ENCODE measurements at regions of chr5 and their contacts with region 1.

Region 1: DNA sequence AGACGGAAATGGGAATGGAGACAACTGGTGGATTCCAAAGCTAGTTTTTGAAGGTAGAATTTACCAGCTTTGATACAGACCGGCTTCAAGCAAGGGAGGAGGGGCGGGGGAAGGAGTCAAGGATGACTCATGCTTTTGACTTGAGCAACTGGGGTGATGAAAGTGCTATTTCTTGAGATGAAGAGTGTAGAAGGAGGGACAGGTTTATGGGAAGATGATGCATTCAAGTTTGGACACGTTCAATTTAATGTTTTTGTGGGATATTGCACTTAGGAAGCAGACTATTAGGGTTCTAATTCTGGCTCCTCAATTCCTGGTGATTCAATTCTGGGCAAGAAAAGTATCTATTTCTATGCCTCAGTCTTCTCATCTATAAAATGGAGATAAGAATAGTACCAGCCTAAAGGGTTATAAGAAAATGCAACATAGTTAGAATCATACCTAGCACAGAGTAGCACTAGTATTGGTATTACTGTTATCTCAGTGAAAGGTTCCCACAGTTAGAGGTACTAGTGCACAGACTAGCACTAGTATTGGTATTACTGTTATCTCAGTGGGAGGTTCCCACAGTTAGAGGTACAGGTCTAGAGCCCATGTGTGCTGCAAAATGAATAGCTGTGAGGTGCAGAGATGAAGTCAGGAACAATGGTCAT is 4.6 kb downstream of the NIPAL4 start:
- DNase-seq: peak; percentile 92
- H3K4me3 Mint-ChIP-seq: peak overlapping the region; percentile 28
- H3K27ac Mint-ChIP-seq: peak overlapping the region; percentile 89
- H3K4me1 Mint-ChIP-seq: peaks cover 36% of the 10 kb centered on the region
- H3K27me3 Mint-ChIP-seq: peaks cover 16% of the 10 kb centered on the region

Region 2: DNA sequence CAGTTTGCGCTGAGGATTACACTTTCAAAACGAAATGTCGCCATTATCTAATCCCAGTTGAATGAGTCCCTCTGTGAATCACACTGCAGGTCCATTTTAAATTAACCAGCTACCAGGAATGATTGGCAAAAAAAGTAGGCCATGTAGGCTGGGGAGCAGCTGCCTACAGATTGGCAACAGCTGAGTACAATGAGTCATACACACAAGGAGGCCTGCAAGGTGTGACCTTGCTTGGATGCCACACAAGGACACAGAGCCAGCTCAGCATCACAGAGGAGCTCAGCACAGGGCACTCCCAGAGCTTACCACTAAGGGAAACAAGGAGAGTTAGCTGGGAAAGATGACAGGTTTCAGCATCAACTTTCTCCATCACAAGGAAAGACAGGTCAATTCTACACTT is 418.6 kb before region 1 on chr5:
- CTCF ChIA-PET with region 1: no interaction called
- intact Hi-C with region 1: loop called (anchors 10 kb)
- DNase-seq: peak; percentile 64
- H3K4me3 Mint-ChIP-seq: no peak overlapping the region
- H3K27ac Mint-ChIP-seq: peak overlapping the region; percentile 34
- H3K4me1 Mint-ChIP-seq: peaks cover 65% of the 10 kb centered on the region
- H3K27me3 Mint-ChIP-seq: no peaks in the 10 kb centered on the region

Region 3: DNA sequence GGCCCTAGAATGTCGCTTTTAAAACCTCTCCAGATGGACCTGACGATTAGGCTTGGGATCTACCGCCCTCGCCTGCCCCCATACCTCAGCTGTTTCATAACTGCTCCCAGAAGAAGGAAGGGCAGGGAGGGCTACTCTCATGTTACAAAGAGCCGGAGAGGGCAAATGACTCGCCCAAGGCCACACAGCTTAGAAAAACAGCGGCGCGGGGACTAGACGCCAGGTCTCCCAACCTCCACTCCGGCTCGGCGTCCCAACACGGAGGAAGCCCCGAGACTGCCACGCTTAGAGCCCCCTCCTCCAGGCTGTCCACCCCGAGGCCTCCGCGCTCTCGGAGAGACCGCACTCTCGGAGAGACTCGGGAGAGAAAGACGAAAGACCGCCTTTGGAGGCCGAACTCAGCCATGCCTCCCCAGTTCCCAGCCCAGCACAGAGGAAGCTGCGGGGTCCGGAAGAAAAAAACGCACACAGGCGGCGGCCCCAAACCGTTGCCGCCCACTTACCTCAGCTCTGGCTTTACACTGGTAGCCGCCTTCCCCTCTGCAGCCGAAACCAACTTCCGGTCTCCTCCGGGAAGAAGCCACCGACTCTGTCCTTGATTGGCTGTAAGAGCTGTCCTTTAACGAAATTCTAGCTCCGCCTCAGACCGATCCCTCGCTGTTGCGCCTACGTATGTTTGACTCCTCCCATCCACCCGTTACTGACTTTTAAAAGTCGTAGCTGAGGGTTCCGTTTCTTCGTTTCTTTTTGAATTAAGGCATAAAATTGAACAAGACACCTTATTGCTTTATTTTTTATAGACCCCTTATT is 322.1 kb before region 1 on chr5 and contains the start of gene MED7:
- CTCF ChIA-PET with region 1: no interaction called
- intact Hi-C with region 1: loop called (anchors 2 kb)
- DNase-seq: peak; percentile 97
- H3K4me3 Mint-ChIP-seq: peak within 1 kb of the TSS; percentile 94
- H3K27ac Mint-ChIP-seq: peak within 1 kb of the TSS; percentile 98
- H3K4me1 Mint-ChIP-seq: peaks cover 38% of the 10 kb centered on the region
- H3K27me3 Mint-ChIP-seq: no peaks in the 10 kb centered on the region
- total RNA-seq, gene MED7: 21.0 to 21.2 TPM

Region 4: DNA sequence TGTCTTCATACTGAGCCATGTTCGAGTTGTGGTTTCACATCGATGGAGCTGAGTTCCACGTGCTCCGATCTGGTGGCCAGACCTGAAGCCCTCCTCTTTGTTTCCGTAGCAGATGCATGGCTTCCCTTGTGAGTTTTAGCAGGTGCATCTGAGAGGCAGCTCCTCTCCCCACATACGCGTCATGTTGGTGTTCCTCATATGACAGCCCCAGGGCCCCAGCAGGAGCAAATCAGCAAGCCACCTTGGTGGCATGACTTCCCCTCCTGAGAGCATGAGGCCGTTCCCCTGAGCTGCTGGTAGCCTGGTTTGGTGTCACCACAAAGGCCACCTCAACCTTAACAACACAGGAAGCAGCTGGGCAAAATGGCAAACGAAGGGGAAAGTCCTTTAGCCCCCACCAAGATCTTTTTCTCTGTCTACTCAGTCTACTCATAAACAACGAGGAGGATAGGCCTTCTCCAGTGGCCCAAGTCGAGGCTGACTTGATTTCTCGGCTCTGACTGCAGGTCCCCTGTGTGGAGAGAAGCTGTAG is 192.8 kb before region 1 on chr5:
- CTCF ChIA-PET with region 1: no interaction called
- intact Hi-C with region 1: loop called (anchors 2 kb)
- DNase-seq: peak; percentile 96
- H3K4me3 Mint-ChIP-seq: peak overlapping the region; percentile 74
- H3K27ac Mint-ChIP-seq: peak overlapping the region; percentile 99
- H3K4me1 Mint-ChIP-seq: peaks cover 79% of the 10 kb centered on the region
- H3K27me3 Mint-ChIP-seq: no peaks in the 10 kb centered on the region

Region 5: GRCh38 chr5:157400741-157401495 is 63.7 kb before region 1 on chr5:
- CTCF ChIA-PET with region 1: no interaction called
- intact Hi-C with region 1: loop called (anchors 1 kb)
- DNase-seq: no peak
- H3K4me3 Mint-ChIP-seq: no peak overlapping the region
- H3K27ac Mint-ChIP-seq: no peak overlapping the region
- H3K4me1 Mint-ChIP-seq: peaks cover 10% of the 10 kb centered on the region
- H3K27me3 Mint-ChIP-seq: no peaks in the 10 kb centered on the region

Region 6: GRCh38 chr5:157582731-157583620 is 118.3 kb after region 1 on chr5:
- CTCF ChIA-PET with region 1: no interaction called
- intact Hi-C with region 1: loop called (anchors 1 kb)
- DNase-seq: peak; percentile 51
- H3K4me3 Mint-ChIP-seq: no peak overlapping the region
- H3K27ac Mint-ChIP-seq: peak overlapping the region; percentile 63
- H3K4me1 Mint-ChIP-seq: peaks cover 40% of the 10 kb centered on the region
- H3K27me3 Mint-ChIP-seq: no peaks in the 10 kb centered on the region

Region 7: GRCh38 chr5:157731272-157732129 is 266.9 kb after region 1 on chr5 and contains the start of gene THG1L:
- CTCF ChIA-PET with region 1: no interaction called
- intact Hi-C with region 1: loop called (anchors 1 kb)
- DNase-seq: peak; percentile 100
- H3K4me3 Mint-ChIP-seq: peak within 1 kb of the TSS; percentile 97
- H3K27ac Mint-ChIP-seq: peak within 1 kb of the TSS; percentile 95
- H3K4me1 Mint-ChIP-seq: peaks cover 25% of the 10 kb centered on the region
- H3K27me3 Mint-ChIP-seq: no peaks in the 10 kb centered on the region
- total RNA-seq, gene THG1L: 28.1 to 30.2 TPM

Region 8: GRCh38 chr5:157750320-157750719 is 285.7 kb after region 1 on chr5:
- CTCF ChIA-PET with region 1: no interaction called
- intact Hi-C with region 1: no loop called
- DNase-seq: no peak
- H3K4me3 Mint-ChIP-seq: no peak overlapping the region
- H3K27ac Mint-ChIP-seq: no peak overlapping the region
- H3K4me1 Mint-ChIP-seq: peaks cover 36% of the 10 kb centered on the region
- H3K27me3 Mint-ChIP-seq: no peaks in the 10 kb centered on the region